BJ (cell line): ENCODE measurements at regions of chr16 and their contacts with region 1.

Region 1: GRCh38 chr16:84754353-84754856 is 54.6 kb downstream of the USP10 start:
- DNase-seq: peak; percentile 41
- H3K4me3 ChIP-seq: no peak overlapping the region
- H3K27me3 ChIP-seq: no peaks in the 10 kb centered on the region
- CTCF ChIP-seq: peak; percentile 72

Region 2: DNA sequence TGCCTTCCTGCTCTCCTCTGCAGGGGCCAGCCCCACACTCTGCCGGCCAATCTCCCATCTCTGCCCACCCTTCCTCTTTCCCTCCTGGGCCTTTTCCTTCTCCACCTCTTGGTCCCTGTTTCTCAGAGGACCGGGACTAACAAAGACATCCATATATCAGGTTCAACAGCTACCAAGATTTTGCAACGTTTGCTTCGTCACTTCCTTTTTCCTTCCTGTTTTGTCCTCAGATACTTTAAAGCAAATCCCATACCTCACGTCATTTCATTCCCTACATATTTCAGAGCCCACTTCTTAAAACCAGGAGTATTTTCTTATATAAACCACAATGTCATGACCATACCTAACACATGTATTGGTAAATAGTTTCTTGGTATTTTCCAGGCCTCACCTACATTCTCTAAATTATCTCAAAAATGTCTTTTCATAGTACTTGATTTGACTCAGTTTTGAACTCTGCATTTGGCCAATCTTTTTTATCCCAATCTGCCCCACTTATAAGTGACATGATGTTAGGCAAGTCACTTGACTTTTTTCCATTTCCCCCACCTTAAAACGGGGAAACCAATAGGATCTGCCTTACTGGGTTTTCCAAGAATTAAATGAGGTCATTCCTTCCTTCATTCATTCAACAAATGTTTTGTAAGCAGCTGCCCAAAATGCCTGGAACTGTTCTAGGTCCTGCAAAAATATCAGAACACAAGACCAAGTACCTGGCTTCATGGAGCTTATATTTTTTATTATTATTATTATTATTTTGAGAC is 61.8 kb before region 1 on chr16:
- CTCF ChIA-PET with region 1: no interaction called
- POLR2A ChIA-PET with region 1: no interaction called
- DNase-seq: no peak
- H3K4me3 ChIP-seq: no peak overlapping the region
- H3K27me3 ChIP-seq: no peaks in the 10 kb centered on the region
- CTCF ChIP-seq: no peak

Region 3: DNA sequence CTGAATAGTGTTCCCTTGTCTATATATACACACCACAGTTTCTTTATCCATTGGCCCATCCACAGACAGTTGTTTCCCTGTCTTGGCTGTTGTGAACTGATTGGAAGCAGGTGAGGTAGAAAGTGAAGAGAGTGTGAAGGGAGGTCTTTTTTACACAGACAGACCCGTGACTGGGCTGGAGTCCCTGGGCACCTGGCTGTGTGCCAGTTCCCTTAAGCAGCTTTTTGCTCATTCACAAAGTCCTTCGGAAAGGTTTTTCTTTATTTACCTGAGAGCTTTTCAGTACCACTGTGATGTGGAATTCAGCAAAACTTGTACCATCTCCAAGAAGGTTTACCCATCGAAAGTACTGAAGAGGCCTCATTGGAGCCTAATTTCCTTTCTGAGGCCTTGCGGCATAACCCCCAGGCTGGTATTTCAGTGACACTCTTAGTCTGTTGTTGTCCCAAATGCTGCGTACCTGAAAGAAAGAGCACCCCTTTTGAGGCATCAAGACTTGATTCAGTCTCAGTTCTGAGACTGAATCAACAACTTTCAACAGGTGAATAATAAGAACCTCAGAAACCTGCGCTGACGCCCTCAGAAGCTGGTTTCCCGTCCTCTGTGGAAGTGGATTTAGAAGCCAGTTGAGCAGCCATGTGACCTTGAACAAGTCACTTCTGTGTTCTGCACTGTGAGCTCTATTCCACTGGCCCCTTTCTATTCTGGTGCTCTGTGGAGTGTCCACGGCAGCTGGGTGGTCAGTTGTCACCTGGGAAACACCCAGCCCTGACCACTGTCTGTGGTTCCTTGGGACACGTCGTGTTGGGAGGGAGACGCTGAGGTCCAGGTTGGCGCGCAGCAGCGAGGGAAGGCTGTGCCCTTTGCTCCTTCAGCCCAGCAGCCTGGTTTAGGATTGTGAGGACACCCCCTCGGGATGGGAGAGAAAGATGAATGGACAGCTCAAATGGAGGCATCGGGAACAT is 11.5 kb after region 1 on chr16:
- CTCF ChIA-PET with region 1: interaction called, 24 read pairs
- POLR2A ChIA-PET with region 1: no interaction called
- DNase-seq: no peak
- H3K4me3 ChIP-seq: no peak overlapping the region
- H3K27me3 ChIP-seq: no peaks in the 10 kb centered on the region
- CTCF ChIP-seq: no peak

Region 4: GRCh38 chr16:84925092-84925772 is 170.8 kb after region 1 on chr16:
- CTCF ChIA-PET with region 1: interaction called, 24 read pairs
- POLR2A ChIA-PET with region 1: no interaction called
- DNase-seq: no peak
- H3K4me3 ChIP-seq: no peak overlapping the region
- H3K27me3 ChIP-seq: no peaks in the 10 kb centered on the region
- CTCF ChIP-seq: peak; percentile 92

Region 5: DNA sequence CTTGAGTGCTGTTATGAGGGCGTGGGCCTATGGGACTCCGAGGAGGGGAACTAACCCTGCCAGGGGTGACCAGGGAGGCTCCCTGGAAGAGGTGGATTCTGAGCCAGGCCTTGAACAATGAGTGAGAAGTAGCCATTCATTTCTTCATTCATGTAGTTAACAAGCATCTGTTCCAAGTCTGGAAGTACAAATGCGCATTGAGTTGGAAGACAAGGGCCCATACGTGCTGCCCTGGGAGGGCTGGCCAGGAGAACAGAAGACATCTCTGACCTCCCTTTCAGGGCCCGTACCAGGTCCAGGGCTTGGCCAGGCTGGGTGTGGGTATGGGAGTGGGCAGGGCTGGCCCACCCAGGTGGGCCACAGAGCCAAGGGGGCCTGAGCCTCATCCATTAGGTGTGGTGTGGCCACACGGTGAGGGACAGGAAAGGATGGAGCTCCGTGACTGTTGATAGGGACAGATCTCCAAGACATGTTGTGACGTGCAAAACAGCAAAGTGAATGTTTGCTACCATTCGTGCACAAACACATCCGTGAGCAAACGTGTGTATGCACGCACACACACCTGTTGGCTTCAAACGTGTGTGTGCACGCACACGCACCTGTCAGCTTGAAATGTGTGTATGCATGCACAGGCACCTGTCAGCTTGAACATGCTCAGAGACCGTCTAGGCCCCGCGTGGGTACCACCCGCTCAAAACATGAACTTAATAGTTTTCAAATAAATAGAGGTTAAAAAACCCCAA is 210.2 kb after region 1 on chr16:
- CTCF ChIA-PET with region 1: interaction called, 112 read pairs
- POLR2A ChIA-PET with region 1: no interaction called
- DNase-seq: no peak
- H3K4me3 ChIP-seq: no peak overlapping the region
- H3K27me3 ChIP-seq: peaks cover 2% of the 10 kb centered on the region; the same call in 1 of the 2 replicates
- CTCF ChIP-seq: no peak